B cell (primary cell): ENCODE measurements at regions of chr6 and their contacts with region 1.

Region 1: DNA sequence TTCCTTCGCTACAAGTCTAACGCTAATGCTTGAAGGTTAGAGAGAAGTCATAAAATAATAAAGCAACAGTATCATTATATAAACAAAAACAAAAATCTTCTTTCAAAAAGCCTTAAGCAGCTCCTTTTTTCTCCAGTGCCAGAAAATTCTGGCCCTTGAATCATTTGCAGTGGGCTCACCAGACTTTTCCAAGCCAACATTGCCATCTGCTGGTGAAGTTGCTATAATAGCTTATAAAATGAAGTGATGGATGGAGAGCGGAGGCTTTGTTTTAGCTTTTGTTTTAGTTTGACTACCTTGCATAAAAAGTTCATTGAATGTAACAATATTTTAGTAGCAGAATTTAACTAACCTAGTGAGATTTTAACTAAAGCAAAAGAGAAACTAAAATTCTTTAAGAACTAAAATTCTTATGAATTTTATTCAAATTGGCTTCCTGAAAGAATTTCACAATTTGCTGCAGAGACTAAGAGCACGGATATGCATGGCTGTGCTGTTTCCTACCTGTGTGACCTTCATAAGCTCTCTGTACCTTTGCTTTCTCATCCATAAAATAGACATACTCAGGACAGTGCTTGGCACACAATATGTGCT is 44.8 kb upstream of the SLC2A12 start:
- DNase-seq: peak; percentile 78
- ATAC-seq: no peak
- H3K4me3 ChIP-seq: no peak overlapping the region
- H3K4me3 Mint-ChIP-seq: no peak overlapping the region
- H3K27ac ChIP-seq: no peak overlapping the region
- H3K27ac Mint-ChIP-seq: no peak overlapping the region
- H3K4me1 ChIP-seq: no peaks in the 10 kb centered on the region
- H3K4me1 Mint-ChIP-seq: peaks cover 4% of the 10 kb centered on the region
- H3K27me3 ChIP-seq: no peaks in the 10 kb centered on the region
- H3K27me3 Mint-ChIP-seq: peaks cover 18% of the 10 kb centered on the region
- CTCF ChIP-seq: peak; percentile 87

Region 2: DNA sequence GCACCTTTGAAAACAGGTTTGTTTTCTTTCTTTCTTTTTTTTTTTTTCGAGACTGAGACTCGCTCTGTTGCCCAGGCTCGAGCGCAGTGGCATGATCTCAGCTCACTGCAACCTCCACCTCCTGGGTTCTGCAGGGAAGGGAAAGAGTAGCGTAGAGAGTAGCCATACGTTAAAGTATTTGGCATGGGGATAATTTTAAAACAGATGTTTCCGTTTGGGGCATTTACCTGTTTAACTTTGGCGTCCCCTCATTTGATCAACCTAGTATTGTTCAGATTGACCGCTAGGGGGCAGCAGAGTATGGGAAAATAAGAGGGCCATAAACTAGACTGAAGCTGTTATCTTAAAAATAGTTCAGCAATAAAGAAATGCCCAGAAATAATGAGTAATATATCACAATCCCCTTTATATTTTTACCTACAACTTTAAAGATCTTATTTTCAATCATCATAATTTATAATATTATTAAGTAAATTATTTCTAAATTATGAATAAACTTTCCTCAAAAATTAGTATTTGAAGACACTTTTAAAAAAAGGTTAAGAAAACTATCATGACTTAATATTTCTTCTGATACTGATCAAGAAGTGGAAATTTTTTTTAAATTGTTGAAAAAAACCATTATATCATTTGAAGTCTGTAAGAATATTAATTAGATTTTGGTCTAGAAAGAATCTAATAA is 1566.8 kb before region 1 on chr6:
- CTCF ChIA-PET with region 1: no interaction called
- POLR2A ChIA-PET with region 1: no interaction called
- intact Hi-C with region 1: loop called (anchors 10 kb)
- DNase-seq: peak; percentile 82
- ATAC-seq: peak; percentile 71
- H3K4me3 ChIP-seq: peak overlapping the region in 4 of 5 experiments; percentile 7 to 54 (median 46)
- H3K4me3 Mint-ChIP-seq: peak overlapping the region; percentile 85
- H3K27ac ChIP-seq: no peak overlapping the region
- H3K27ac Mint-ChIP-seq: peak overlapping the region; percentile 77
- H3K4me1 ChIP-seq: peaks cover 3 to 4% of the 10 kb centered on the region in 2 donors
- H3K4me1 Mint-ChIP-seq: peaks cover 4% of the 10 kb centered on the region
- H3K27me3 ChIP-seq: no peaks in the 10 kb centered on the region
- H3K27me3 Mint-ChIP-seq: no peaks in the 10 kb centered on the region
- CTCF ChIP-seq: peak; percentile 90

Region 3: DNA sequence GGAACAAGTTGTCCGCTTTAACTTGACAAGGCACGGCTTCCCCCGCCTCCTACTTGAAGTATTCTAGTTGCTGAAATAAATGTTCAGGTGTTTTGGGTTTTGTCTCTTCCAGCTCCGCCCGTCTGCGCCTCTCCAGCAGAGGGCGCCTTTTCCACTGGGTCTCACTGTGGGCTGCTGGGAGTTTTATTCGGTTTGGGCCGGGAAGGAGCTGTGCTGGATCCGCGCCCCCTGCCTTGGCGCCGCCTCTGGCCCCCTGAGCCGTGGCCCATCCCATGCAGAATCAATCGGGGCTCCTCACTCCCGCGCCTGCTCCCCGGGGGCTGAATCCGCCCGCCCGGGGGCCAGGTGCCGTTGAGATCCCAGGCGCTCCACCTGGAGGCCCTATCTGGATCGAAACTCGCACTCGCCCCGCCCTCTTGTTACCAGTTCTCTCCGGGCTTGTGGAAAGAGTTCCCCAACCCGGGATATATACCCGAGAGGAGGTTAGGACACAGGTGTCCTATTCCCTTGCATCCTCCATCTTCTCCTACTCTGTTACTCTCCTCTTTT is 259.3 kb before region 1 on chr6:
- CTCF ChIA-PET with region 1: interaction called, 22 read pairs
- POLR2A ChIA-PET with region 1: no interaction called
- intact Hi-C with region 1: loop called (anchors 1 kb)
- DNase-seq: peak; percentile 59
- ATAC-seq: peak; percentile 49
- H3K4me3 ChIP-seq: peak overlapping the region in 3 of 5 experiments; percentile 23 to 44 (median 29)
- H3K4me3 Mint-ChIP-seq: peak overlapping the region; percentile 62
- H3K27ac ChIP-seq: no peak overlapping the region
- H3K27ac Mint-ChIP-seq: no peak overlapping the region
- H3K4me1 ChIP-seq: peaks cover 7 to 8% of the 10 kb centered on the region in 2 donors
- H3K4me1 Mint-ChIP-seq: peaks cover 7% of the 10 kb centered on the region
- H3K27me3 ChIP-seq: peaks cover 0 to 19% (median 6%) of the 10 kb centered on the region in 4 experiments
- H3K27me3 Mint-ChIP-seq: peaks cover 33% of the 10 kb centered on the region
- CTCF ChIP-seq: peak; percentile 65

Region 4: GRCh38 chr6:133937909-133938308 is 159.3 kb before region 1 on chr6:
- CTCF ChIA-PET with region 1: interaction called, 12 read pairs
- POLR2A ChIA-PET with region 1: no interaction called
- intact Hi-C with region 1: no loop called
- DNase-seq: no peak
- ATAC-seq: no peak
- H3K4me3 ChIP-seq: no peak overlapping the region
- H3K4me3 Mint-ChIP-seq: no peak overlapping the region
- H3K27ac ChIP-seq: no peak overlapping the region
- H3K27ac Mint-ChIP-seq: no peak overlapping the region
- H3K4me1 ChIP-seq: no peaks in the 10 kb centered on the region
- H3K4me1 Mint-ChIP-seq: no peaks in the 10 kb centered on the region
- H3K27me3 ChIP-seq: peaks cover 0 to 11% (median 2%) of the 10 kb centered on the region in 4 experiments
- H3K27me3 Mint-ChIP-seq: peaks cover 30% of the 10 kb centered on the region
- CTCF ChIP-seq: no peak

Region 5: DNA sequence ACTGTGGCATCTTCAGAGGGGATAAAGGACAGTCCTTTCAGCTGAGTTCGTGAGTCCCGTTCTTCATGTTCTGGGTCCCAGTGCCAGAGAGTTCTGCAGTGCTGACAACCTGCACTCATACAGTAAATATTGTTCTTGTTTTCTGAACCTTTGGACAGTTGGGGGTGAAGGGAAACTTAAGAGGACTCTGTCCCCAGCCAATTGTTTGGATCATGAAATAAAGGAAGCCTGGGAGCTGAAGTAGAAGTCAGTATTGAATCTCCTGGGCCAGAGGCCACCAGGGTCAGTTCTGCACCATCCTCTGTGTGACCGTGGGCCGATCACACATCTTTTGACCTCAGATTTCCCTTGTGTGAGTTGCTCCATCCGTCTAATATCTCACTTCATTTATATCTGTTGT is 48.0 kb before region 1 on chr6:
- CTCF ChIA-PET with region 1: interaction called, 13 read pairs
- POLR2A ChIA-PET with region 1: no interaction called
- intact Hi-C with region 1: no loop called
- DNase-seq: no peak
- ATAC-seq: no peak
- H3K4me3 ChIP-seq: no peak overlapping the region
- H3K4me3 Mint-ChIP-seq: no peak overlapping the region
- H3K27ac ChIP-seq: no peak overlapping the region
- H3K27ac Mint-ChIP-seq: no peak overlapping the region
- H3K4me1 ChIP-seq: peaks cover 8 to 10% of the 10 kb centered on the region in 2 donors
- H3K4me1 Mint-ChIP-seq: peaks cover 10% of the 10 kb centered on the region
- H3K27me3 ChIP-seq: no peaks in the 10 kb centered on the region
- H3K27me3 Mint-ChIP-seq: peaks cover 14% of the 10 kb centered on the region
- CTCF ChIP-seq: no peak

Region 6: GRCh38 chr6:134111062-134111677 is 14.0 kb after region 1 on chr6:
- CTCF ChIA-PET with region 1: interaction called, 19 read pairs
- POLR2A ChIA-PET with region 1: no interaction called
- intact Hi-C with region 1: no loop called
- DNase-seq: peak; percentile 69
- ATAC-seq: peak; percentile 53
- H3K4me3 ChIP-seq: no peak overlapping the region
- H3K4me3 Mint-ChIP-seq: no peak overlapping the region
- H3K27ac ChIP-seq: no peak overlapping the region
- H3K27ac Mint-ChIP-seq: no peak overlapping the region
- H3K4me1 ChIP-seq: no peaks in the 10 kb centered on the region
- H3K4me1 Mint-ChIP-seq: no peaks in the 10 kb centered on the region
- H3K27me3 ChIP-seq: peaks cover 0 to 11% (median 0%) of the 10 kb centered on the region in 4 experiments
- H3K27me3 Mint-ChIP-seq: peaks cover 19% of the 10 kb centered on the region
- CTCF ChIP-seq: peak; percentile 88

Region 7: DNA sequence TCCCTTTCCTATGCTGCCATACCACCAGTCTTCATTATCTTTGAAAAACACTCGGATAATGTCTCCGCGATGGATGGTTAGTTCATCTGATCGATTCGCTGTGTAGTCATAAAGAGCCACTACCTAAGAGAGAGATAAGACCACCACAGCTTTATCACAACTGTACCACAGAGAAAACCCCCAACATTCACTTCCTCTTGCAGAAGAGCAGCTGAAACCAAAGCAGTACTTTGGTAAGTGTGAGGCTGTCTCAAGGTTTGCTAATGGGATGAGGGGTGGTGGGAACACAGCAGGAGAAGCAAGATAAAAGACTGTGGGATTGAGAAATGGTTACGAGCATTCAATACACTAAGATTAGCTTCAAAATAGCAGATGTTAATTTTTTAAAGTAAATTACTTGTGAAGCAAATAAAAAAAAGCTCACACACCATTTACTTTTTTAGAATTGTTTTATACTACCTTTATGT is 1226.0 kb after region 1 on chr6:
- CTCF ChIA-PET with region 1: no interaction called
- POLR2A ChIA-PET with region 1: no interaction called
- intact Hi-C with region 1: no loop called
- DNase-seq: peak; percentile 52
- ATAC-seq: peak; percentile 69
- H3K4me3 ChIP-seq: peak overlapping the region in 2 of 5 experiments; percentile 5 to 11
- H3K4me3 Mint-ChIP-seq: peak overlapping the region; percentile 30
- H3K27ac ChIP-seq: peak overlapping the region in 1 of 2 donors; percentile 10
- H3K27ac Mint-ChIP-seq: no peak overlapping the region
- H3K4me1 ChIP-seq: peaks cover 11 to 12% of the 10 kb centered on the region in 2 donors
- H3K4me1 Mint-ChIP-seq: peaks cover 11% of the 10 kb centered on the region
- H3K27me3 ChIP-seq: no peaks in the 10 kb centered on the region
- H3K27me3 Mint-ChIP-seq: no peaks in the 10 kb centered on the region
- CTCF ChIP-seq: no peak